ENCODE measurements at regions of chr1 and their contacts with region 1.

Region 1: GRCh38 chr1:185670187-185670627 is 64.0 kb upstream of the HMCN1 start:
- DNase-seq: peak in 1 of 2 donors; percentile 55
- ATAC-seq: peak; percentile 54 to 75 (median 68)
- H3K4me3 ChIP-seq: peak overlapping the region in 2 of 10 donors; percentile 18 to 26
- H3K27ac ChIP-seq: peak overlapping the region in 4 of 10 donors; percentile 13 to 55 (median 16)
- H3K4me1 ChIP-seq: peaks cover 0 to 50% (median 28%) of the 10 kb centered on the region in 9 donors
- H3K27me3 ChIP-seq: no peaks in the 10 kb centered on the region
- CTCF ChIP-seq: peak in 8 of 9 donors; percentile 33 to 81 (median 70)

Region 2: GRCh38 chr1:185238447-185238846 is 431.8 kb before region 1 on chr1:
- intact Hi-C with region 1: loop called in 7 of 10 experiments (anchors 2 to 10 kb)
- DNase-seq: no peak
- ATAC-seq: no peak
- H3K4me3 ChIP-seq: no peak overlapping the region
- H3K27ac ChIP-seq: no peak overlapping the region
- H3K4me1 ChIP-seq: peaks cover 0 to 14% (median 0%) of the 10 kb centered on the region in 9 donors
- H3K27me3 ChIP-seq: no peaks in the 10 kb centered on the region
- CTCF ChIP-seq: peak; percentile 14 to 64 (median 48)

Region 3: DNA sequence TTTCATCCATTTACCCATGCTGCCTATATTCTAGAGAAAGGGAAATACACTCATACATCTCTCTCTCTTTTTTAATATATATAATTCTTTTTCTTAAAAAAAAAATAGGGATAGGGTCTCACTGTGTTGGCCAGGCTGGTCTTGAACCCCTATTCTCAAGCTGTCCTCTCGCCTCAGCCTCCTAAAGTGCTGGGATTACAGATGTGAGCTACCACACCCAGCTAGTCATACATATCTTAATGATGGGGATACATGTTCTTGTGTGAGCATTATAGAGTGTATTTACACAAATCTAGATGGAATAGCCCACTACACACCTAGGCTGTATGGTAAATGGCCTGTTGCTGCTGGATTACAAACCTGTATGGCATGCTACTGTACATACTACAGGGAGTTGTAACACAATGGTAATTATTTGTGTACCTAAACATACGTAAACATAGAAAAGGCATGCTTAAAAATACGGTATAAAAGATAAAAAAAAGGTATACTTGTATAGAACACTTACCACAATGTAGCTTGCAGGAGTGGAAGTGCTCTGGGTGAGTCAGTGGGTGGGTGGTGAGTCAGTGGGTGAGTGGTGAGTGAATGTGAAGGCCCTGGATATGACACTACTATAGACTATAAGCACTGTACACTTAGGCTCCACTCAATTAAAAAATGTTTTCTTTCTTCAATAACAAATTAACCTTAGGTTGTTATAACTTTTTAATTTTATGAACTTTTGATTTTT is 426.0 kb before region 1 on chr1:
- intact Hi-C with region 1: loop called in 7 of 10 experiments (anchors 2 to 10 kb)
- DNase-seq: no peak
- ATAC-seq: no peak
- H3K4me3 ChIP-seq: no peak overlapping the region
- H3K27ac ChIP-seq: no peak overlapping the region
- H3K4me1 ChIP-seq: peaks cover 0 to 13% (median 0%) of the 10 kb centered on the region in 9 donors
- H3K27me3 ChIP-seq: no peaks in the 10 kb centered on the region
- CTCF ChIP-seq: no peak

Region 4: GRCh38 chr1:185317034-185317885 is 352.9 kb before region 1 on chr1 and contains the start of gene IVNS1ABP:
- intact Hi-C with region 1: loop called (anchors 2 to 10 kb)
- DNase-seq: peak; percentile 95
- ATAC-seq: peak; percentile 88 to 95 (median 91)
- H3K4me3 ChIP-seq: peak within 1 kb of the TSS; percentile 85 to 99 (median 92)
- H3K27ac ChIP-seq: peak within 1 kb of the TSS; percentile 90 to 99 (median 96)
- H3K4me1 ChIP-seq: peaks cover 3 to 49% (median 44%) of the 10 kb centered on the region in 9 donors
- H3K27me3 ChIP-seq: no peaks in the 10 kb centered on the region
- CTCF ChIP-seq: peak in 5 of 9 donors; percentile 10 to 43 (median 25)
- total RNA-seq, gene IVNS1ABP: 44.7 to 132 (median 66.7) TPM

Region 5: DNA sequence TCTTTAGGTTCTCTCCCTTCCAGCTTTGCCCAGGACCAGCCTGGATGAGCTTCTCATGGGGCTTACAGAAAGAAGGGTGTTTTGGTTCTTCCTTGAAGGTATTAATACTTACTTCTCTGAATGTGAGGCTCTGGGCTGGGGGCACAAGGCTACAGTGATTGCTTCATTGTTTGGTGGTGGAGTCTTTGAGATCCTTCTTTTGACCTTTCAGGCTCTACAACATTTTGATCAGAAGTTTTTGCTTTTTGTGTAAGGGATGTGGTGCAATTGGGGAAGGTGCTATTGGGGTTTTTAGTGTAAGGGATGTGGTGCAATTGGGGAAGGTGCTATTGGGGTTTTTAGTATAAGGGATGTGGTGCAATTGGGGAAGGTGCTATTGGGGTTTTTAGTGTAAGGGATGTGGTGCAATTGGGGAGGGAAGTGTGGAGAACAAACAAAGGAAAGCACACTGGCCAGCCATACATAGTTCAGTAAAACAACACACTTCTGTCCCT is 249.6 kb before region 1 on chr1:
- intact Hi-C with region 1: loop called in 6 of 10 experiments (anchors 5 to 10 kb)
- DNase-seq: no peak
- ATAC-seq: peak in 2 of 8 donors; percentile 33 to 46
- H3K4me3 ChIP-seq: no peak overlapping the region
- H3K27ac ChIP-seq: peak overlapping the region in 2 of 10 donors; percentile 62 to 86
- H3K4me1 ChIP-seq: peaks cover 0 to 8% (median 0%) of the 10 kb centered on the region in 9 donors
- H3K27me3 ChIP-seq: no peaks in the 10 kb centered on the region
- CTCF ChIP-seq: no peak

Region 6: DNA sequence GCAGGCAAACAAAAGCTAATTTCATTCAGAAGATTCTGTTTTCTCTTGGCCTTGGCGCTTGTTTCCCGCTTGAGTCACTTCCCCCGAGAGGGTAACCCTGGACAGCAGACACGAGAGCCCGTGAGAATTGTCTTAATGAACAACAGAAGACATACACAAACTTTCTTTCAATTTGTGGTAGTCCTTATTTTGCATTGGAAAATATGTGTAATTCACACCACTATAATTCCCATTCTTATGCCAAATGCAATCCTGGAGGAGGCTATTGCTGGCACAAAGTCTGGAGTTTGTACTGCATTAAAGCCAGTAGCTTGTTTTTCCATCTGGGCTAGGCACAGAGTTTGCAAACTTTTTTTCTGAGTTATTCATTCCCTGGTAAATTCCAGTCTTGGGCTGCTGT is 243.4 kb before region 1 on chr1:
- intact Hi-C with region 1: loop called in 6 of 10 experiments (anchors 5 to 10 kb)
- DNase-seq: peak; percentile 15 to 57
- ATAC-seq: peak; percentile 74 to 89 (median 86)
- H3K4me3 ChIP-seq: no peak overlapping the region
- H3K27ac ChIP-seq: peak overlapping the region in 8 of 10 donors; percentile 7 to 85 (median 70)
- H3K4me1 ChIP-seq: peaks cover 0 to 19% (median 11%) of the 10 kb centered on the region in 9 donors
- H3K27me3 ChIP-seq: no peaks in the 10 kb centered on the region
- CTCF ChIP-seq: peak in 3 of 9 donors; percentile 13 to 37 (median 26)

Region 7: DNA sequence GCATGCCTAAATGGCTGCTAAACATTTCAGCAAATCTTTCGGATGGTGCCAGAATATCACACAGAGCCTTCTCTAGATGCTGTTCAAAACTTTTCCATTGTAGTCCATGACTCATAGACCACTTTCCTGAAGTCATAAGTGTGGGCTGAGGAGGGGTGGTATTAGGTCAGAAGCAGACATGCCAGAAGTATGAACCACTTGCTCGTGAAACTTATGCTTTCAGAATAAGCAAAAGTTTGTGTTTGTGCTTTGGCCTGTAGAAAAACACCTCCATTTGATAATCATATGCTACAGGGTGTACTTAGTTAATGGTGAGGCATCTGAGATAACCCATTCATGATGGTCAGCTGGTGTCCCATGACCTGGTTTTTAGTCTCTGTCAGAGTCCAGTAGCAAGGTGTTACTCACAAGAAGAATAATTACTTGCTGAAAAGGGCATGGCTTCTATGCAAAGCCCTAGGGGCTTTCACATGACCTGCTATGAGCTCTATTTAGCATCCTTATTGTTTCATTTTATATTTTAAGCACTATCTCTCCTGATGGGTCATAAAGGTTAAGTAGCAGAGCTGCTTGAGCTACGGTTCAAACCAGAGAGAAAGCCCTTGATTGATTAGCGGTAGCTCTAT is 170.1 kb before region 1 on chr1:
- intact Hi-C with region 1: no loop called
- DNase-seq: no peak
- ATAC-seq: no peak
- H3K4me3 ChIP-seq: no peak overlapping the region
- H3K27ac ChIP-seq: no peak overlapping the region
- H3K4me1 ChIP-seq: peaks cover 0 to 5% (median 0%) of the 10 kb centered on the region in 9 donors
- H3K27me3 ChIP-seq: no peaks in the 10 kb centered on the region
- CTCF ChIP-seq: no peak

Region 8: DNA sequence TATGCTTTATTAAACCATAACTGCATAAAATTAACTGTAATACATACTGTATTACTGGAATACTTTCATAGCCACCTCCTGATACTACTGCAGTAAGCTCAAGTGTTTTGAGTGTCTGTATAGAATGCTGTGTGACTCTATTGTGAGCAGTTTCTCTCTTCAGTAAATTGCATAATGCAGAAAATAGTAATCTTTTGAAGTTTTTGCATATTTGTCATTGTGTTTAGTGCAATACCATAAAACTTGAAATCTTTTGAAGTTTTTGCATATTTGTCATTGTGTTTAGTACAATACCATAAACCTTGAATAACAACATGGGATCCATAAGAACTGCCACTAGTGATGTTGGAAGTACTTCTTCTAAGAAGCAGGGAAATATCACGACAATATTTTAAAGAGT is 693.7 kb after region 1 on chr1:
- intact Hi-C with region 1: no loop called
- DNase-seq: no peak
- ATAC-seq: no peak
- H3K4me3 ChIP-seq: no peak overlapping the region
- H3K27ac ChIP-seq: no peak overlapping the region
- H3K4me1 ChIP-seq: peaks cover 0 to 6% (median 0%) of the 10 kb centered on the region in 9 donors
- H3K27me3 ChIP-seq: no peaks in the 10 kb centered on the region
- CTCF ChIP-seq: no peak